ENCODE measurements at regions of chr22 and their contacts with region 1.

Region 1: DNA sequence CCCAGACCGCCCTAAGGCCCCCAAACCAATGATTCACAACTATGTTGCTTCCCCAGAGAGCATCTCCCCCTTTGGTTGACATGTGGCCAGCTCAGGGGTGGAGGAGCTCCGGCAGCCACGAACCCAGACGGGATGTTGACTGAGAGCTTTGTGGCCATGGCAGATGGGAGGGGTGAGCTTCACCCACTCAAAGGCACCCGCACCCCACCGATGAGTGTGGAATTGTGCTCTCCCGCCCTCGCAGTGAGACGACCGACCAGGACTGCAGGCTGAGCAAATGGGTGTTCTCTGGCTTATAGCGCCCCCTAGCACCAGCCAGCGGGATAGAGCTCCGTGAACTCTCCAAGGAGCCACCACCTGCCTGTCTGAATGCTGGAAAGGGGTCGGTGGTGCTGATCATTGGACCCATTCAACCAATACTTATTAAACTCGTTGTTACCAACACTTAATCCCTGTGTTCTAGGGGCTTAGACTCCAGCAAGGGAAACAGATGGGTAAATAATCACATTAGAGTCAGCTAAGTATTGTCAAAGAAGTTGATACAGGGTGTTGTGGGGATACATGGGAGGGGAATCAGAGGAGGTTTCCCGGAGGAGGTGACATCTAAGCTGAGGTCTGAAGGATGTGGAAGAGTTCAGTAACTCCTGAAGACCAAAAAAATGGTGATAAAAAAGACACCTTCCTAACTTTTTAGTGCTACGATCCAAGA is 4.5 kb upstream of the TIMP3 start:
- DNase-seq: no peak
- H3K4me3 ChIP-seq: peak overlapping the region; percentile 27
- CTCF ChIP-seq: peak; percentile 97

Region 2: GRCh38 chr22:32396746-32397145 is 400.3 kb before region 1 on chr22:
- CTCF ChIA-PET with region 1: no interaction called
- POLR2A ChIA-PET with region 1: no interaction called
- DNase-seq: no peak
- H3K4me3 ChIP-seq: no peak overlapping the region
- CTCF ChIP-seq: no peak

Region 3: GRCh38 chr22:32539631-32540421 is 257.2 kb before region 1 on chr22:
- CTCF ChIA-PET with region 1: interaction called, 501 read pairs
- POLR2A ChIA-PET with region 1: interaction called, 4 read pairs
- DNase-seq: no peak
- H3K4me3 ChIP-seq: no peak overlapping the region
- CTCF ChIP-seq: no peak

Region 4: DNA sequence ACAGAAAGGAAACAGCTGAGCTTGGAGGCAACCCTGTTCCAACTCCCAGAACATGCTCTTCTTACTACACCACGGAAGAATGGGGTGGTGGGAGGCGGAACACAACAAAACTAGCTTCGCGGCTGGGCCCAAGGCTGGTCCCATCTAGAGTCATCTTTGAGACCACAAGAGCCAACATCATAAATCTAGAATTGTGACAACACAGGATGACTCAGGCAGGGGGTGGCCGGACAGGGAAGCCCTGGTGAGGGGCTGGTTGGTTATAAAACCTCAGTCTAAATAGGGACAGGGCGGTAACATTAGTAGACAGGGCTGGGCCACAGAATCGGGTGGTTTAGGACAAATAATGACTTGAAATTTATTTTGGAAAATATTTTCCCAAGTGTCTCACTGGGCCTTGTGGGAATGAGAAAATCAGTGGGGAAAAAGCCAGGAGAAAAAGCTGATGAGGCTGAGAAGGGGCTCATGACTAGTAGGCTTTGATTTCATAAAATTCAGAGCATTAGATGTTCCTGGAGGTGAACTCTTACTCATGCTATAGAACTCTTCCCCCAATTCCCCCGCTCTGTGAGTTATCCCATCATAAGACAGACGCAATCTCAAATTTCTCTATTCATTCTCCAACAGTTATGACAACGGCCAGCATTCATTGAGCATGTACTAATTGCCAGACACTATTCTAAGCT is 147.4 kb before region 1 on chr22:
- CTCF ChIA-PET with region 1: interaction called, 578 read pairs
- POLR2A ChIA-PET with region 1: interaction called, 14 read pairs
- DNase-seq: no peak
- H3K4me3 ChIP-seq: no peak overlapping the region
- CTCF ChIP-seq: no peak

Region 5: GRCh38 chr22:32695451-32695891 is 101.5 kb before region 1 on chr22:
- CTCF ChIA-PET with region 1: interaction called, 15 read pairs
- POLR2A ChIA-PET with region 1: interaction called, 4 read pairs
- DNase-seq: peak; percentile 61
- H3K4me3 ChIP-seq: no peak overlapping the region
- CTCF ChIP-seq: no peak

Region 6: DNA sequence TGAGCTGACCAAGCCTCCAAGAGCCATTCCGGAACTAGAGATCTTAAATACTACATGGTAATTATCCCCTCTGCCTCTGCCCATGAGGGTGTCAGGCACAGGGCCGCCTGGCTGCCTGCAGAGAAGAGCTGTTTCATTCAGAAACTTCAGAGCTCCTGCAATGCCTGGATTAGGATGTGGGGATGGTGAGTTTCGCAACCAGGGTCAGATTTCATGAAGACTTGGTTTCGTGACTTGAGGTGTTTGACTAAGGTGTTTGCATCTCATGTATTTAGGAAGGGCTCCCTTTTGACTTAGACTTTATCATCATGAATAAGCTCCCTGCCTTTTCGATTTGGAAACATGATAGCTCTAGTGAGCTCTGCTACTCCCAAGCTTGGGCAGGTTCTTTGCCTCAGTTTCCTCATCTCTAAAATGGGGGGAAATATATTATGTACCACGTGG is 13.6 kb after region 1 on chr22:
- CTCF ChIA-PET with region 1: interaction called, 58 read pairs
- POLR2A ChIA-PET with region 1: interaction called, 28 read pairs
- DNase-seq: no peak
- H3K4me3 ChIP-seq: no peak overlapping the region
- CTCF ChIP-seq: no peak

Region 7: GRCh38 chr22:32904044-32904443 is 107.0 kb after region 1 on chr22:
- CTCF ChIA-PET with region 1: no interaction called
- POLR2A ChIA-PET with region 1: no interaction called
- DNase-seq: no peak
- H3K4me3 ChIP-seq: no peak overlapping the region
- CTCF ChIP-seq: no peak

Region 8: GRCh38 chr22:32985899-32986765 is 189.1 kb after region 1 on chr22:
- CTCF ChIA-PET with region 1: interaction called, 27 read pairs
- POLR2A ChIA-PET with region 1: interaction called, 7 read pairs
- DNase-seq: peak; percentile 21
- H3K4me3 ChIP-seq: no peak overlapping the region
- CTCF ChIP-seq: peak; percentile 86